Gastrocnemius medialis (tissue), 4 donors: ENCODE measurements at regions of chr9 and their contacts with region 1.

Region 1: DNA sequence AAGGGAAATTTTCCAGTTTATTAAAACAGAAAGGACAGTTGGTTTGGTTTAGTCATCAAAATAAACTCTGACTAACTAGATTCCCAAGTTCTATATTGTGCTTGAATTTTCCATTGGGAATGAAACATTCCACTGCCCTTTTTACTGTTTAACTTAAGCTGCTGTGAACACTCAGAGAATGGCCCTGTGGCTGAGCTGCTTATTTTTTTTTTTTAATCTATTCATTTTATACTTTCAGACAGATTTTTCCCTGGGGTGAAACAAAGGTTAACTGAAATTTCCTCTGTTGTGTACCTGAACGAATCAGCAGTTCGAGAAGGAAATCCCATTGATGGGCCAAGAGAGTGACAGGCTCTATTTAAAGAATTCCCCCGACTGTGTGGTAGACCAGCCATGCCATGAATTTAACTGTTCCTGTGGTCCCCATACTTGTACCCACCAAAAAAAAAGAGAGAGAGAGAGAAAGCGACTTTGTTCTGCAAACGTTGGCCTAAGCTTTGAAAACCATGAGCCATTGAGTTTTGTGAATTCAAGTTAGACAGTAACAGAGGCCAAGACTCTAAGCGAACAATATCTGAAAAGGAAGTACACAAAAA is 138.7 kb upstream of the GRHPR start:
- DNase-seq: no peak
- ATAC-seq: no peak
- H3K4me3 ChIP-seq: no peak overlapping the region
- H3K27ac ChIP-seq: no peak overlapping the region
- H3K4me1 ChIP-seq: no peaks in the 10 kb centered on the region
- H3K27me3 ChIP-seq: no peaks in the 10 kb centered on the region
- CTCF ChIP-seq: no peak
- POLR2A ChIP-seq: no peak

Region 2: DNA sequence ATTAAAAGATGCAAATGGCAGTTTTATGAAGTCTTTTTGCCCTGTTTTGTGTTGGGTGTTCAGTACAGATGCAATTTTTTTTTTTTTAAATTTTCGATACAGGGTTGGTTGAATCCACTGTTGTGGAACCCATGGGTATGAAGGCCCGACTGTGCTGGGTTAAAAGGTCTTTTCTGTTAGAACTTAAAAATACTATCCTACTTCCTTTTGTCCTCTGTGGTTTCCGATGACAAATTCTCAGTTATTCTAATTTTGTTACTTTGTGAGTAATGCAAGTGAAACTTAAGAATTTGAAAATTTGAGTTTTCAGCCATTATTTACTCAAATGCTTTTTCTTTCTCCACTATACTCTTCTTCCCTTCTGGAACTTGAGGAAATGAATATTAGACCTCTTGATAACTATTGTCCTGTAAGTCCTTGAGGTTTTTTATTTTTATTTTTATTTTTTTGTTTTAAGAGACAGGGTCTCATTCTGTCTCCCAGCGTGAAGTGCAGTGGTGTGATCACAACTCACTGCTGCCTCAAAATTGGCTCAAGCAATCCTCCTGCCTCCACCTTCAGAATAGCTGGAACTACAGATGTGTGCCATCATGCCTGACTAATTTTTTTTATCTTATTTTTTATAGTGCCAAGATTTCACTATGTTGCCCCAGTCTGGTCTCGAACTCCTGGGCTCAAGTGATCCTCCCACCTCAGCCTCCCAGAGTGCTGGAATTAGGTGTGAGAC is 96.0 kb before region 1 on chr9:
- in situ Hi-C with region 1: no loop called
- intact Hi-C with region 1: no loop called
- DNase-seq: no peak
- ATAC-seq: no peak
- H3K4me3 ChIP-seq: no peak overlapping the region
- H3K27ac ChIP-seq: no peak overlapping the region
- H3K4me1 ChIP-seq: no peaks in the 10 kb centered on the region
- H3K27me3 ChIP-seq: no peaks in the 10 kb centered on the region
- CTCF ChIP-seq: no peak
- POLR2A ChIP-seq: no peak

Region 3: GRCh38 chr9:37293664-37294524 is 10.1 kb after region 1 on chr9:
- in situ Hi-C with region 1: no loop called
- intact Hi-C with region 1: loop called (anchors 1 kb)
- DNase-seq: no peak
- ATAC-seq: no peak
- H3K4me3 ChIP-seq: no peak overlapping the region
- H3K27ac ChIP-seq: no peak overlapping the region
- H3K4me1 ChIP-seq: peaks cover 6 to 14% of the 10 kb centered on the region in 2 donors
- H3K27me3 ChIP-seq: no peaks in the 10 kb centered on the region
- CTCF ChIP-seq: no peak
- POLR2A ChIP-seq: no peak

Region 4: DNA sequence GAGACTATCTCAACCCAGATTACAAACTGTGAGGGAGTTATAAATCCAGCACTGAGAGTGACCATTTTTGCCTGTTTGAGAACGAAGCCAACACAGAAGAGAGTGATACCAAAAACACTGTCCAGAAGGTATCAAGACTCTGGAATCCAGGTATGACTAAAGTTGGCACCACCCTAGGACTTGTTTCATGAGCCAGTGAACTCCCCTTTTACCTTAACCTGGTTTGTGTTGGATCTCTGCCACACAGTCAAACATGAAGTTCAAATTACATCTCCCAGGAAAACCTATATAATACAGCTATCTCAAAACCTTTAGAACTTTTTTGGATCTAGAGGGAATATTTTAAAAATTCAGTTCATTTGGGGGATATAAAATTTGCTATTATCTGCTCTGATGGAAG is 170.0 kb after region 1 on chr9:
- in situ Hi-C with region 1: no loop called
- intact Hi-C with region 1: no loop called
- DNase-seq: no peak
- ATAC-seq: no peak
- H3K4me3 ChIP-seq: no peak overlapping the region
- H3K27ac ChIP-seq: no peak overlapping the region
- H3K4me1 ChIP-seq: peaks cover 13 to 36% of the 10 kb centered on the region in 2 donors
- H3K27me3 ChIP-seq: no peaks in the 10 kb centered on the region
- CTCF ChIP-seq: no peak
- POLR2A ChIP-seq: no peak